ENCODE measurements at regions of chr1 and their contacts with region 1.

Region 1: DNA sequence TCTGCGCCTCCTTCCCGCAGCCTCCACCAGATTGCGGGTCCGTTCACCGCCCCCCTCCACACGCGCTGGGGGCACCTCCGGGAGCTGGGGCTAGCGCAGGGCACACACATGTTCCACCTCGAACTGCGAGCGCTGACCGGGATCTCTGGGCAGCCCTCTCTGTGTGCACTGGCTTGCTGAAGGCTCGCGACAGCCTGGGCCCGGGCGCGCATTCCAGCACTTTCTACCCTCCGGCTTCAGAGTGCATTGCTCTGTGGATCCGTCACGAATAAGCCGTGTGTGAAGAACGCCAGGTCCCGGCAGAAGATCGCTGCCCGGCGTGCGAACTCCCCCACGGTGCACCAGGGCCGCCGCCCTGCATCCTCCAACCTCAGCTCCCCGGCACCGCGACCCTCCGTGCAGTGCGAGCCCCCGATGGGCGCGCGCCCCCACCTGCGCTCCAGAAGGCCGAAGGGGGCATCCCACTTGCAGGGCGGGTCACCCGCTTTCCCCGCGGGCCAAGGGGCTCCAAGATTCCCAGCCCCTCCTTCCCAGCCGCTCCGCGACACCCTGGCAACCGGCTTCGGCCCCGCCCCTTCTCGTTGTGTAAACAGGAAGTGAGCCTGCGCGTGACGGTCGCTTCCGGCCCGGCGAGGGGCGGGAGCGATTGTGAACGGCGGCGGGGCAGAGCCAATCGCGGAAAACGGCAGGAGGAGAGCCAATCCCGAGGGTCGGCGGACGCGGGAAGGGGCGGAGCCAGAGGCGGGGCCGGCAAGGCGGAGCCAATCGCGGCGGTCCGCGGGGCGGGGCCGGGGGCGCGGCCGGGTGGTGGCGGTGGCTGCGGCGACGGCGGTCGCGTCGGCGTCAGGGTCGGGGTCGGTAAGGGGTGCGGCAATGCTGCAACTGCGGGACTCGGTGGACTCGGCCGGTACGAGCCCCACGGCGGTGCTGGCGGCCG is at the start of gene TPRG1L:
- DNase-seq: peak; percentile 91
- ATAC-seq: peak; percentile 81
- H3K4me3 ChIP-seq: peak within 1 kb of the TSS; percentile 94 to 99 (median 94)
- H3K27ac ChIP-seq: peak within 1 kb of the TSS; percentile 90
- H3K4me1 ChIP-seq: peaks cover 30% of the 10 kb centered on the region
- H3K27me3 ChIP-seq: no peaks in the 10 kb centered on the region
- CTCF ChIP-seq: no peak
- EP300 ChIP-seq: no peak
- POLR2A ChIP-seq: no peak; a peak in 2 of 4 replicates
- RAD21 ChIP-seq: no peak
- total RNA-seq, gene TPRG1L: 21.3 and 31.7 TPM in 2 replicates

Region 2: DNA sequence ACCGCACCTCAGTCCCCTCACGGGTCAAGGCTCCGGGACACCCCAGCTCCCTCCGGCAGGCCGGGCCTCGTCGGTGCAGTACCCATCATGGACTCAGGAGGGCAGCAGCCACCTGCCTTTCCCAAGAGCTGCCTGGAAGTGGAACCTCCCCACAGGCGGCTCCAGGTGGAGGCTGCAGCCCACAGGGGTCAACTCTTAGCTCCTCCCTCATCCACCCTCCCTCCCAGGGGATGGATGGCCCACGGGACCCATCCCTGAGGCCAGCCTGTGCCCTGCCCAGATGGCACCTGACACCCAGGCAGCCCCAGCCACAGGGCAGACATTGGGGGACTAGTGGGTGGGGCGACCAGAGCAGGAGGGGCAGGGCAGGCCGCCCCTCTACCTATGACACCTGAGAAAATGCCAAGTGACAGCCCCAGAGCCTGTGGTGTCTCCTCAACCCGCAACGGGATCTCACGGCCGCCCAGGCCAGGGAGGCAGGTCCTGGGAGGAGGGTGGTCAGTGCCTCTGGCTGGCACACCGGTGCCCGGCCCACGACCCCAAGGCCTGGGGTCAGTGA is 171.2 kb before region 1 on chr1:
- CTCF ChIA-PET with region 1: no interaction called
- POLR2A ChIA-PET with region 1: interaction called, 3 read pairs
- in situ Hi-C with region 1: no loop called
- intact Hi-C with region 1: loop called (anchors 5 kb)
- DNase-seq: peak; percentile 69
- ATAC-seq: peak; percentile 22
- H3K4me3 ChIP-seq: peak overlapping the region in 1 of 3 experiments; percentile 79; a peak in 1 of 6 replicates
- H3K27ac ChIP-seq: peak overlapping the region; percentile 98
- H3K4me1 ChIP-seq: peaks cover 74% of the 10 kb centered on the region
- H3K27me3 ChIP-seq: no peaks in the 10 kb centered on the region
- CTCF ChIP-seq: peak; percentile 98
- EP300 ChIP-seq: no peak
- POLR2A ChIP-seq: no peak
- RAD21 ChIP-seq: peak; percentile 99

Region 3: GRCh38 chr1:3483801-3484444 is 140.5 kb before region 1 on chr1:
- CTCF ChIA-PET with region 1: no interaction called
- POLR2A ChIA-PET with region 1: no interaction called
- in situ Hi-C with region 1: loop called (anchors 5 kb)
- intact Hi-C with region 1: no loop called
- DNase-seq: peak; percentile 36
- ATAC-seq: peak; percentile 54
- H3K4me3 ChIP-seq: no peak overlapping the region; a peak in 1 of 6 replicates
- H3K27ac ChIP-seq: no peak overlapping the region
- H3K4me1 ChIP-seq: peaks cover 40% of the 10 kb centered on the region
- H3K27me3 ChIP-seq: 0 out of 5 replicates have a peak, but pooled peaks cover under 1 to 1% of the 10 kb centered on the region in 2 experiments
- CTCF ChIP-seq: peak; percentile 94
- EP300 ChIP-seq: no peak
- POLR2A ChIP-seq: no peak; a peak in 1 of 4 replicates
- RAD21 ChIP-seq: peak; percentile 91

Region 4: GRCh38 chr1:3564921-3565827 is 59.3 kb before region 1 on chr1:
- CTCF ChIA-PET with region 1: interaction called, 32 read pairs
- POLR2A ChIA-PET with region 1: no interaction called
- in situ Hi-C with region 1: loop called (anchors 5 kb)
- intact Hi-C with region 1: loop called (anchors 1 kb)
- DNase-seq: no peak
- ATAC-seq: peak; percentile 41
- H3K4me3 ChIP-seq: no peak overlapping the region
- H3K27ac ChIP-seq: no peak overlapping the region
- H3K4me1 ChIP-seq: peaks cover 12% of the 10 kb centered on the region; the same call in 1 of the 2 replicates
- H3K27me3 ChIP-seq: peaks cover 2 to 34% of the 10 kb centered on the region in 2 experiments; a peak in 3 of 5 replicates
- CTCF ChIP-seq: peak; percentile 95
- EP300 ChIP-seq: no peak
- POLR2A ChIP-seq: no peak
- RAD21 ChIP-seq: peak; percentile 90

Region 5: GRCh38 chr1:3649342-3650247 is 25.1 kb after region 1 on chr1 and contains the start of gene WRAP73:
- CTCF ChIA-PET with region 1: no interaction called
- POLR2A ChIA-PET with region 1: no interaction called
- in situ Hi-C with region 1: no loop called
- intact Hi-C with region 1: loop called (anchors 2 kb)
- DNase-seq: peak; percentile 87
- ATAC-seq: peak; percentile 82
- H3K4me3 ChIP-seq: peak within 1 kb of the TSS; percentile 95 to 100 (median 98)
- H3K27ac ChIP-seq: no peak within 1 kb of the TSS
- H3K4me1 ChIP-seq: peaks cover 25% of the 10 kb centered on the region
- H3K27me3 ChIP-seq: peaks cover 2 to 11% of the 10 kb centered on the region in 2 experiments; a peak in 3 of 5 replicates
- CTCF ChIP-seq: peak; percentile 62
- EP300 ChIP-seq: no peak
- POLR2A ChIP-seq: peak; percentile 65 to 76
- RAD21 ChIP-seq: peak; percentile 26; the same call in 1 of the 2 replicates
- total RNA-seq, gene WRAP73: 18.1 and 21.0 TPM in 2 replicates

Region 6: GRCh38 chr1:3940081-3940753 is 315.7 kb after region 1 on chr1:
- CTCF ChIA-PET with region 1: no interaction called
- POLR2A ChIA-PET with region 1: no interaction called
- in situ Hi-C with region 1: no loop called
- intact Hi-C with region 1: no loop called
- DNase-seq: no peak
- ATAC-seq: no peak
- H3K4me3 ChIP-seq: no peak overlapping the region
- H3K27ac ChIP-seq: no peak overlapping the region
- H3K4me1 ChIP-seq: peaks cover 29% of the 10 kb centered on the region
- H3K27me3 ChIP-seq: peaks cover 6 to 56% of the 10 kb centered on the region in 2 experiments; a peak in 3 of 5 replicates
- CTCF ChIP-seq: no peak
- EP300 ChIP-seq: no peak
- POLR2A ChIP-seq: no peak
- RAD21 ChIP-seq: no peak